Prostate gland (tissue), 2 donors: ENCODE measurements at regions of chr16 and their contacts with region 1.

Region 1: DNA sequence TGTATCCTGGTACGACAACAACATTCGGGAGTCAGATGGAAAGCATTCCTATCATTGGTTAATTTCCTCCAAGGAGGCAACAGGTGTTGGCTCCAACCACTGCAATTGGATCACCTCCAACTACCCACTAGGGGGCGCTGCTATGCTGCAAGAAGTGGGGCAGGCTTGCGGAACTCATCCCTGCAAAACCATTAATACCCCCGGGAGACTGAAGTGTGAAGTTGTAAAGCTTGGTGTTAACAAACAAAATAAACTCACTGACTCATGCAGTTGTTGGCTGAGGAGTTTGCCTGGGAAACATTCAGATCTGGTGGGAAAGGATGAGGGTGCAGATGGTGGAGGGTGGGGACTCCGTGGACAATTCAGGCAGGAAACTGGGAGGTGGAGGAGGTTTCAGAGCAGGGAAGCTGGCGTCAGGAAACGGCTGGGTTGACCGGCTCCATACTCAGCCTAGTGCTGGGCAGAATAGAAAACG is 84.9 kb downstream of the HS3ST2 start:
- DNase-seq: peak; percentile 43
- H3K4me3 ChIP-seq: no peak overlapping the region
- H3K27ac ChIP-seq: no peak overlapping the region
- H3K4me1 ChIP-seq: no peaks in the 10 kb centered on the region
- H3K27me3 ChIP-seq: peaks cover 4% of the 10 kb centered on the region
- CTCF ChIP-seq: peak; percentile 60 to 81 (median 64)
- POLR2A ChIP-seq: no peak

Region 2: GRCh38 chr16:22677024-22677830 is 221.7 kb before region 1 on chr16:
- intact Hi-C with region 1: loop called (anchors 5 kb)
- DNase-seq: no peak
- H3K4me3 ChIP-seq: no peak overlapping the region
- H3K27ac ChIP-seq: no peak overlapping the region
- H3K4me1 ChIP-seq: no peaks in the 10 kb centered on the region
- H3K27me3 ChIP-seq: no peaks in the 10 kb centered on the region
- CTCF ChIP-seq: no peak
- POLR2A ChIP-seq: no peak

Region 3: DNA sequence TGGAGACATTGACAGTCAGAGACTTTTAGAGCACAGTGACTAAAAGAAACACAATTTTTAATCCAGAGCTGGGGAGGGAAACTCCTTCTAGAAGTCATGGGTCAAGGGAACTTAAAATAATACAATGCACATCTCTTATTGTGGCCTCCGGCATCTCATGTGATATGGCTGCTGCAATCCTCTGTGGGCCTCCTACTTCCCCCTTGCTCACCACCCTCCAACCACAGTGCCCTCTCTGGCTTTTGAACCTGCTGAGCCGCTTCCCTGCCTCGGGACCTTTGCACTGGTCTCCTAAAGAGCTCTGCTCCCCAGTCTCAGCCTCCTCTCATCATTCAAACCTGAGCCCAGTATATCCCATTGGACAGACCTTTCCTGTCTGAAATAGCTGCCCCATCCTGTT is 37.3 kb before region 1 on chr16:
- intact Hi-C with region 1: no loop called
- DNase-seq: no peak
- H3K4me3 ChIP-seq: no peak overlapping the region
- H3K27ac ChIP-seq: no peak overlapping the region
- H3K4me1 ChIP-seq: no peaks in the 10 kb centered on the region
- H3K27me3 ChIP-seq: no peaks in the 10 kb centered on the region
- CTCF ChIP-seq: no peak
- POLR2A ChIP-seq: no peak

Region 4: DNA sequence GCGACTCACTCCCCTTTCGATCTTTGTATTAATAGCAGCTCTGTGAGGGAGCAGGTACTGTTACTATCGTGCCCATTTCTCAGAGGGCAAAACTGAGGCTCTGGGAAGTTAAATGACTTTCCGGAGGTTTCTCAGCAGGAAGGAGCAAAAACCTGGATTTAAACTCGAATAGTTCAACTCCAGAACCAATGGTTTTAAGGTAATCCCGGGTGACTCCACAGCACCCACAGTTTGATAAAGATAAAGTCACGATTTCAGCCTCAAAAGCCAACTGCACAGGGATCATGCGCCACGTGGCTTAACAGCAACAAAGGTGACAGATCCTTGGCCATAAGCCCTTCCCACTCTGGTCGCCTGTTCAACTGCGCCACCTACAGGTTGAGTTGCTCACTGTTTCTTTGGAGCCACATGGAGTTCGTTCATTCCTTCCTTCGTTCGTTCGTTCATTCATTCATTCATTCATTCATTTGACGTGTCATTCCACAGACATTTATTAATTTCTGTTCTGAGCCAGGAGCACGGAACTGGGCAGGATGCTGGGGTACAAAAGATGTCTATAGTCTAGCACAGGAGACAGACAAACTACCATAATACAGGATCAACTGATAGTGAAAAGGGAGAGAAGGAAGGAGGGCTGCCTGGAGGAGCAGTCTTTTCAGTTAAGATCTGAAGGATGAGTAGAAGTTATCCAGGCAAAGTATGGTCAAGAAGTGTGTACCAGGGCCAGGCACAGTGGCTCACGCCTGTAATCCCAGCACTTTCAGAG is 49.9 kb after region 1 on chr16:
- intact Hi-C with region 1: no loop called
- DNase-seq: peak; percentile 48
- H3K4me3 ChIP-seq: no peak overlapping the region
- H3K27ac ChIP-seq: no peak overlapping the region
- H3K4me1 ChIP-seq: no peaks in the 10 kb centered on the region
- H3K27me3 ChIP-seq: peaks cover 3% of the 10 kb centered on the region
- CTCF ChIP-seq: peak; percentile 48 to 82 (median 81)
- POLR2A ChIP-seq: no peak

Region 5: DNA sequence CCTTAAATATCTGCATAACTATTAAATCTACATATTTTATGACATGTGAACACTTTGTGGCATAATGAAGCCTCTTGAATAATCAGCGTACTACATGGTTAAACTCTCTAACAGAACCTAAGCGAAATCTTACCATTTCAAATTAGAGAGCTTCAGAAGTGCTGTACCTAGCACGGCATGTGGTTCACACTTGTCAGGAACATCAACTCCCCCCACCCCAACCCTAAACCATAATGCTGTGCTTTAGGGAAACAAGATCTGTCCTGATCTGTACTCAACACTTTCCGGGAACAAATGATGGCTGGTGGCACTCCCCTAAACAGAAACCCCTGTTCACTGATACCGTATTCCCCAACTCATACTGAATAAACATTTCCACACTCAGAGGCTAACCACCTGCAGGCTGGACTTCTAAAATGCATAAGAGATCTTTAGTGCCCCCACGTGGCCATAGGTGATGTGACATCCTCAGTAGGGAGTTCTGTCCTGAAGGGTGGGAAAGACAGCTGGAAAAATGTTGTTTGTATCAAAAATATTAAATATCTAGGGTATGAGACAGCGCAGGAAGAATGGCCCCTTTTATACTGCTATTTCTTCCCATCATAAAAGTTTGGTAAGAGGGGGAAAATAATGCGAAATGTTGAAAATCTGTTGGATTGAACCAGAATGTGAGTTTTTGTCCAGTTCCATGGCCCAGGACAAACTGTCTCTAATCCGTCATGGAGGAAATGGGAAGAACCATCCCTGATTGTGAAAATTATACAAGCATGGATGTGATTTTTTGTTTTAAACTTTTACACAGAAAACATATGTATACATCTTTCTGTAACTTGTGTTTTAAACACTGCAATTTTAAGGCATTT is 161.8 kb after region 1 on chr16:
- intact Hi-C with region 1: loop called (anchors 10 kb)
- DNase-seq: peak; percentile 67
- H3K4me3 ChIP-seq: no peak overlapping the region
- H3K27ac ChIP-seq: no peak overlapping the region
- H3K4me1 ChIP-seq: no peaks in the 10 kb centered on the region
- H3K27me3 ChIP-seq: no peaks in the 10 kb centered on the region
- CTCF ChIP-seq: peak in 3 of 4 experiments; percentile 70 to 71 (median 71)
- POLR2A ChIP-seq: no peak

Region 6: GRCh38 chr16:23435500-23435899 is 536.6 kb after region 1 on chr16:
- intact Hi-C with region 1: loop called (anchors 2 kb)
- DNase-seq: peak; percentile 63
- H3K4me3 ChIP-seq: no peak overlapping the region
- H3K27ac ChIP-seq: peak overlapping the region; percentile 2 to 20
- H3K4me1 ChIP-seq: peaks cover 7% of the 10 kb centered on the region
- H3K27me3 ChIP-seq: no peaks in the 10 kb centered on the region
- CTCF ChIP-seq: peak; percentile 44 to 88 (median 78)
- POLR2A ChIP-seq: no peak